ENCODE measurements at regions of chr5 and their contacts with region 1.

Region 1: GRCh38 chr5:15092801-15093200 is 221.2 kb upstream of the ANKH start:
- DNase-seq: no peak
- ATAC-seq: no peak
- H3K4me3 ChIP-seq: no peak overlapping the region
- H3K27ac ChIP-seq: no peak overlapping the region
- H3K4me1 ChIP-seq: no peaks in the 10 kb centered on the region
- H3K27me3 ChIP-seq: peaks cover 6% of the 10 kb centered on the region
- CTCF ChIP-seq: no peak
- POLR2A ChIP-seq: no peak
- RAD21 ChIP-seq: no peak

Region 2: GRCh38 chr5:14976486-14976885 is 116.3 kb before region 1 on chr5:
- CTCF ChIA-PET with region 1: no interaction called
- POLR2A ChIA-PET with region 1: no interaction called
- dilution Hi-C with region 1: no loop called
- in situ Hi-C with region 1: no loop called
- intact Hi-C with region 1: no loop called
- DNase-seq: no peak
- ATAC-seq: no peak
- H3K4me3 ChIP-seq: no peak overlapping the region
- H3K27ac ChIP-seq: no peak overlapping the region
- H3K4me1 ChIP-seq: no peaks in the 10 kb centered on the region
- H3K27me3 ChIP-seq: peaks cover 32% of the 10 kb centered on the region
- CTCF ChIP-seq: no peak
- POLR2A ChIP-seq: no peak
- RAD21 ChIP-seq: no peak

Region 3: DNA sequence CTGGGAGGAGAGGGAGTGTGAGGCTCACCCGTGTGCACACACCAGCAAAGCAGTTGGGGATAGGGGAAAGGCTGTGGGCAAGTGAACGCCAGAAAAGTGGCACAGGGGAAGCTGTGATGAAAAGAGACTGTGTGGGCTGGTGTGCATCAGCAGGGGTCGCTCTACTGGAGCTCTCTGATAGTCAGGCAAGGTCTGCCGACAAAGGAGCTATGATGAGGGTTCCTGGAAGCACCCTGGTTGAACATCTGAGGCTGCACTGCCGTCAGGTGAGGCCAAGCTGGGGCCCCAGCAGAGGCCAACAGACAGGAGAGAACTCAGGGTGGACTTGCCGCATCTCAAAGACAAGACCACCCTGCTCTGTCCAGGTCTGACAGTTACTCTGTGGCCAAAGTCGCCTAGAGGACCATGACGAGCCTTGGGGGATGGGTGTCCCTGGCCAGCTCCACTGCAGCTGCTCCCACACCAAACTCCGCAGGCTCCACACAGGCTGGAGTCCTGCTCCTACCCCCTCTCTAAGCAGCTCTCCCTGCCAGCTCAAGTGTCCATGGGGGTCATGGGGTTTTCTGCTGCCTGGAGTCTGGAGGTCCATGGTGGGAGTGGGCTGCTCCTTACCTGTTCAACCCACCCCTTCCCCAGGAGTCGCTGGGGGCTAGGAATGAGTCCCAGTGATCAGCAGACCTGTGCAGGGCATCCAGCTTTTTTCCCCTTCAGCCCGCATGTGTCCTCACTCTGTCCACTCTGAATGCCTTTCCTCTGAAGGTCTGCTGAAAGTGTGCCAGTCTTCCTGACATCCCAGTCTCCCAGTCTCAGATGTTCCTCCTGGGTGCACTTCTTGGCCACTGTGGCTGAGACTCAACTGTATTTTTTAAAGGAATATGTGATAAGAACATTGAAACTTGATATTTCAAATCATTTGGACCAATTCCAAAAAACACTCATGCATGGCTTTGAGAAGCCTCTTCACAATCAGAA is 39.9 kb after region 1 on chr5:
- CTCF ChIA-PET with region 1: interaction called, 10 read pairs
- POLR2A ChIA-PET with region 1: no interaction called
- dilution Hi-C with region 1: no loop called
- in situ Hi-C with region 1: no loop called
- intact Hi-C with region 1: no loop called
- DNase-seq: no peak
- ATAC-seq: no peak
- H3K4me3 ChIP-seq: no peak overlapping the region
- H3K27ac ChIP-seq: no peak overlapping the region
- H3K4me1 ChIP-seq: no peaks in the 10 kb centered on the region
- H3K27me3 ChIP-seq: peaks cover 2% of the 10 kb centered on the region; the same call in 1 of the 2 replicates
- CTCF ChIP-seq: no peak
- POLR2A ChIP-seq: no peak
- RAD21 ChIP-seq: no peak

Measured in IMR-90 (cell line).